ENCODE measurements at regions of chr11 and their contacts with region 1.

Region 1: GRCh38 chr11:1515082-1516060 is 28.8 kb upstream of the MOB2 start:
- DNase-seq: peak; percentile 71 to 89 (median 87)
- H3K4me3 ChIP-seq: no peak overlapping the region
- H3K27ac ChIP-seq: no peak overlapping the region
- H3K4me1 ChIP-seq: peaks cover 12% of the 10 kb centered on the region
- H3K27me3 ChIP-seq: no peaks in the 10 kb centered on the region
- CTCF ChIP-seq: peak; percentile 90 to 95 (median 90)
- EP300 ChIP-seq: no peak
- POLR2A ChIP-seq: no peak

Region 2: GRCh38 chr11:1202776-1203504 is 312.4 kb before region 1 on chr11:
- intact Hi-C with region 1: loop called (anchors 2 to 5 kb)
- DNase-seq: peak in 4 of 5 donors; percentile 53 to 75 (median 68)
- H3K4me3 ChIP-seq: no peak overlapping the region
- H3K27ac ChIP-seq: no peak overlapping the region
- H3K4me1 ChIP-seq: no peaks in the 10 kb centered on the region
- H3K27me3 ChIP-seq: no peaks in the 10 kb centered on the region
- CTCF ChIP-seq: peak; percentile 74 to 86 (median 78)
- EP300 ChIP-seq: no peak
- POLR2A ChIP-seq: no peak

Region 3: GRCh38 chr11:1309498-1310317 is 205.7 kb before region 1 on chr11 and contains the start of gene TOLLIP:
- intact Hi-C with region 1: loop called in 1 of 4 experiments (anchors 10 kb)
- DNase-seq: peak; percentile 96 to 98 (median 97)
- H3K4me3 ChIP-seq: peak within 1 kb of the TSS; percentile 91
- H3K27ac ChIP-seq: peak within 1 kb of the TSS; percentile 66 to 90
- H3K4me1 ChIP-seq: peaks cover 16% of the 10 kb centered on the region
- H3K27me3 ChIP-seq: no peaks in the 10 kb centered on the region
- CTCF ChIP-seq: peak in 2 of 3 donors; percentile 47 to 54
- EP300 ChIP-seq: no peak
- POLR2A ChIP-seq: peak; percentile 71
- total RNA-seq, gene TOLLIP: 26.1 to 60.8 (median 53.9) TPM

Region 4: GRCh38 chr11:1435820-1436467 is 79.4 kb before region 1 on chr11:
- intact Hi-C with region 1: no loop called
- DNase-seq: no peak
- H3K4me3 ChIP-seq: no peak overlapping the region
- H3K27ac ChIP-seq: no peak overlapping the region
- H3K4me1 ChIP-seq: peaks cover 5% of the 10 kb centered on the region
- H3K27me3 ChIP-seq: no peaks in the 10 kb centered on the region
- CTCF ChIP-seq: no peak
- EP300 ChIP-seq: no peak
- POLR2A ChIP-seq: no peak

Region 5: GRCh38 chr11:1458340-1459218 is 56.8 kb before region 1 on chr11:
- intact Hi-C with region 1: loop called in 2 of 4 experiments (anchors 5 kb)
- DNase-seq: peak; percentile 85 to 93 (median 86)
- H3K4me3 ChIP-seq: no peak overlapping the region
- H3K27ac ChIP-seq: peak overlapping the region; percentile 80 to 92
- H3K4me1 ChIP-seq: peaks cover 19% of the 10 kb centered on the region
- H3K27me3 ChIP-seq: no peaks in the 10 kb centered on the region
- CTCF ChIP-seq: peak in 2 of 3 donors; percentile 15 to 25
- EP300 ChIP-seq: no peak
- POLR2A ChIP-seq: no peak

Region 6: GRCh38 chr11:1576825-1577224 is 61.5 kb after region 1 on chr11:
- intact Hi-C with region 1: no loop called
- DNase-seq: no peak
- H3K4me3 ChIP-seq: no peak overlapping the region
- H3K27ac ChIP-seq: no peak overlapping the region
- H3K4me1 ChIP-seq: no peaks in the 10 kb centered on the region
- H3K27me3 ChIP-seq: no peaks in the 10 kb centered on the region
- CTCF ChIP-seq: no peak
- EP300 ChIP-seq: no peak
- POLR2A ChIP-seq: no peak

Measured in ovary (tissue), 10 donors.